ENCODE measurements at regions of chr2 and their contacts with region 1.

Region 1: DNA sequence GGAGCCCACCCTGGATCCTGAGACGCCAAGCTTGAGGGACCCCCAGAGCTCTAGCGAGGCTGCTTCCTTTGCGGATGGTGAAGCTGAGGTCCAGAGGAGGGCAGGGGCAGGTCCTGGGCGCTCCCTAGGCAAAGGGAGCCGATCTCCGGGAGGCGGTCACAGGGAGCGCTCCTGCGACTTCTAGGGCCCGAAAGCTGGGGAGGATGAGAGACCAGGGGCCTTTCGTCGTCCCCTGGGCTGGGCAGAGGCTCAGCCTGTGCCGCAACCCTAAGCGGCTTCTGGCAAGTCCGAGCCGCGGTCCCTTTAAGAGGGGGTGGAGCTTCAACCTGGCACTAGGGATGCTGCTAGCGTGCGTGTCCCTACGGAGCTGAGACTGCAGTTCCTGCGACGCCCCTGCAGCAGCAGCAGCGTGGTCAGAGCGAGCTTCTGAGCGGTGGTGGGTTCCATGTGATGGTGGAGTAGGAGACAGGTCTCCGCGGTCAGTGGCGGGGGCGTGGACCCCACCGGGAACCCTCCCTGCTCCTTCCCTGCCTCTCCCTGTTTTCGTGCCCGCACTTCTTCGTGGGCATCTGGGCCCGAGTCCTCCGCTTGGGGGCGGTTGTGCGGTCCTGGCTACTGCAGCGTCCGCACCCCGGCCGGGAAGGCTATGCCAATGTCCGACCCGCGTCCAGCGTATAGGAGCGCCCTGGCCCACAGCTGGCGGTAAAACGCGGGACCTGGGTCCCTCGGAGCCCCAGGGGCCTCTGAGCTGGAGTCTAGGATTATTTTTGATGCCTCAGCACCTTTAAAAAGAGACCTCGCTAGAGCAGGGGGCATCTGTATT is 154.6 kb downstream of the CCDC74A start:
- DNase-seq: peak; percentile 55
- H3K4me3 ChIP-seq: peak overlapping the region; percentile 75
- H3K27me3 ChIP-seq: no peaks in the 10 kb centered on the region
- CTCF ChIP-seq: peak; percentile 48

Region 2: GRCh38 chr2:131492418-131493198 is 189.7 kb before region 1 on chr2:
- CTCF ChIA-PET with region 1: interaction called, 10 read pairs
- POLR2A ChIA-PET with region 1: no interaction called
- DNase-seq: peak; percentile 34
- H3K4me3 ChIP-seq: peak overlapping the region; percentile 95
- H3K27me3 ChIP-seq: no peaks in the 10 kb centered on the region
- CTCF ChIP-seq: peak; percentile 89

Region 3: GRCh38 chr2:131567891-131568290 is 114.4 kb before region 1 on chr2:
- CTCF ChIA-PET with region 1: no interaction called
- POLR2A ChIA-PET with region 1: no interaction called
- DNase-seq: no peak
- H3K4me3 ChIP-seq: no peak overlapping the region
- H3K27me3 ChIP-seq: no peaks in the 10 kb centered on the region
- CTCF ChIP-seq: no peak

Region 4: DNA sequence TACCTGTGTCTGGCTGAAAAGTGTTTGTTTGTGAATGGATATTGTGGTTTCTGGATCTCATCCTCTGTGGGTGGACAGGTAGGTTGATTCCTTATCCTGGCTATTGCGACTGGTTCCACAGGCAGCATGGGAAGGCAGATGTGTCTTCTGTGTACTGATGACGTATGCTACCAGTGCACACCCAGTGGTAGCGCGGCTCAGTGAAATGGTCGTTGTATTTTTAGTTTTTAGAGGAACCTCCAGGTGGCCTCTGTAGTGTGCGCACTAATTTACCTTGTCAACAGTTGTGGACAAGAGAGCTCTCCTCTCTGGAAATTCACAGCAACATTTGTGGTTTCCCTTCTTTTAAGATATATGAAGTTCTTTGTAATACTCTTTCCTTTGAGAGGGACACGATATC is 102.1 kb before region 1 on chr2:
- CTCF ChIA-PET with region 1: no interaction called
- POLR2A ChIA-PET with region 1: no interaction called
- DNase-seq: no peak
- H3K4me3 ChIP-seq: no peak overlapping the region
- H3K27me3 ChIP-seq: no peaks in the 10 kb centered on the region
- CTCF ChIP-seq: no peak

Region 5: GRCh38 chr2:131801210-131801744 is 118.9 kb after region 1 on chr2:
- CTCF ChIA-PET with region 1: interaction called, 19 read pairs
- POLR2A ChIA-PET with region 1: no interaction called
- DNase-seq: no peak
- H3K4me3 ChIP-seq: no peak overlapping the region
- H3K27me3 ChIP-seq: no peaks in the 10 kb centered on the region
- CTCF ChIP-seq: no peak